WTC11 (cell line): ENCODE measurements at regions of chr17 and their contacts with region 1.

Region 1: DNA sequence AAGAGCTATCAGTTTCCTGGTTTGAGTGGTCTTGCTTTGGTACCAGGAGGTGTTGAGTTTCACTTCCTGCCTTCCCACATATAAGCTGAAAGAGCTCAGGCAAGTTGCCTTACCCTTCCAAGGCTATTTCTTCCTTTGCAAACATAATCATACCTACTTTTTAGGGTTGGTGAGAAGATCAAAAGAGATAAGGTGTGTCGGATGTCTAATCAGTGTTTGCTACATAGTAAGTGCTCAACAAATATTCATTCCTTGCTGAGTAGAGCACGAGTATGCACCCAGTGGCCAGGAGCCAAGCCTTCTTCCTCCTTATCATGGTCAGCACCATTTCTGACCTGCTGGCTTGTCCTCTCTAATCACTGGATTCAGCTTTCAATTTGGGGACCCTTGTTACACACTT is 12.7 kb upstream of the TMEM98 start:
- DNase-seq: no peak
- ATAC-seq: no peak
- H3K4me3 Mint-ChIP-seq: no peak overlapping the region
- H3K27ac Mint-ChIP-seq: no peak overlapping the region
- H3K4me1 Mint-ChIP-seq: peaks cover 38% of the 10 kb centered on the region
- H3K27me3 Mint-ChIP-seq: no peaks in the 10 kb centered on the region
- CTCF ChIP-seq: no peak

Region 2: GRCh38 chr17:32936894-32937500 is 21.8 kb after region 1 on chr17:
- CTCF ChIA-PET with region 1: interaction called, 16 read pairs
- POLR2A ChIA-PET with region 1: no interaction called
- DNase-seq: peak; percentile 92
- ATAC-seq: peak; percentile 95
- H3K4me3 Mint-ChIP-seq: no peak overlapping the region
- H3K27ac Mint-ChIP-seq: peak overlapping the region; percentile 93
- H3K4me1 Mint-ChIP-seq: peaks cover 22% of the 10 kb centered on the region
- H3K27me3 Mint-ChIP-seq: no peaks in the 10 kb centered on the region
- CTCF ChIP-seq: peak; percentile 85